CD8-positive, alpha-beta T cell (primary cell): ENCODE measurements at regions of chr19 and their contacts with region 1.

Region 1: GRCh38 chr19:41641879-41642485 is 15.1 kb upstream of the CEACAM4 start:
- DNase-seq: peak; percentile 36 to 82 (median 71)
- ATAC-seq: peak; percentile 66
- H3K4me3 ChIP-seq: no peak overlapping the region
- H3K4me3 Mint-ChIP-seq: no peak overlapping the region
- H3K27ac ChIP-seq: no peak overlapping the region
- H3K27ac Mint-ChIP-seq: no peak overlapping the region
- H3K4me1 ChIP-seq: peaks cover 21% of the 10 kb centered on the region
- H3K4me1 Mint-ChIP-seq: peaks cover 19% of the 10 kb centered on the region
- H3K27me3 ChIP-seq: no peaks in the 10 kb centered on the region
- H3K27me3 Mint-ChIP-seq: peaks cover 20% of the 10 kb centered on the region
- CTCF ChIP-seq: peak; percentile 95

Region 2: GRCh38 chr19:40777937-40778705 is 863.9 kb before region 1 on chr19 and contains the start of gene RAB4B:
- CTCF ChIA-PET with region 1: no interaction called
- POLR2A ChIA-PET with region 1: no interaction called
- intact Hi-C with region 1: no loop called
- DNase-seq: peak; percentile 100
- ATAC-seq: peak; percentile 83
- H3K4me3 ChIP-seq: peak within 1 kb of the TSS; percentile 87 to 89
- H3K4me3 Mint-ChIP-seq: peak within 1 kb of the TSS; percentile 92
- H3K27ac ChIP-seq: peak within 1 kb of the TSS; percentile 93 to 98
- H3K27ac Mint-ChIP-seq: peak within 1 kb of the TSS; percentile 95
- H3K4me1 ChIP-seq: peaks cover 26% of the 10 kb centered on the region
- H3K4me1 Mint-ChIP-seq: peaks cover 37% of the 10 kb centered on the region
- H3K27me3 ChIP-seq: no peaks in the 10 kb centered on the region
- H3K27me3 Mint-ChIP-seq: no peaks in the 10 kb centered on the region
- CTCF ChIP-seq: no peak
- total RNA-seq, gene RAB4B: 19.9 to 21.3 TPM

Region 3: DNA sequence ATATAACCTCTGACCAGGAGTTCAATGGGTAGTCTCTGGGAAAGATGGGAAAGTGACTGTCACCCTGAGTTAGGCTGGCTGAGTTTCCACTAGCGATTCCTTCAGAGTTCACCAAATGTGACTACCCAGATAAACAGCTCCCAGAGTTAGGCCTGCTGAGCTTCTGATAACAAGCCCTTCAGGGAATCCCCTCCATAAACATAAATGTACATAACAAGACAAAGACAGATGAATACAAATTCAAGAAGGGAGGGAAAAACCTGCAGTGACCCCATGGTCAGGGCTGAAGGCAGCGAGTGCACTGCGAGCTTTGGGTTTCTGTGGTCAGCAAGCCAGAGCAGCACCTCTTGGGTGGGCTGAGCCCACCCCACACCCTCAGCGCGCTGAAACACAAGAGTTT is 10.3 kb after region 1 on chr19:
- CTCF ChIA-PET with region 1: interaction called, 30 read pairs
- POLR2A ChIA-PET with region 1: interaction called, 4 read pairs
- intact Hi-C with region 1: no loop called
- DNase-seq: no peak
- ATAC-seq: no peak
- H3K4me3 ChIP-seq: no peak overlapping the region
- H3K4me3 Mint-ChIP-seq: no peak overlapping the region
- H3K27ac ChIP-seq: no peak overlapping the region
- H3K27ac Mint-ChIP-seq: no peak overlapping the region
- H3K4me1 ChIP-seq: peaks cover 9% of the 10 kb centered on the region
- H3K4me1 Mint-ChIP-seq: peaks cover 6% of the 10 kb centered on the region
- H3K27me3 ChIP-seq: peaks cover 0 to 3% of the 10 kb centered on the region in 2 experiments
- H3K27me3 Mint-ChIP-seq: peaks cover 40% of the 10 kb centered on the region
- CTCF ChIP-seq: no peak

Region 4: GRCh38 chr19:41701401-41702075 is 59.6 kb after region 1 on chr19:
- CTCF ChIA-PET with region 1: interaction called, 10 read pairs
- POLR2A ChIA-PET with region 1: no interaction called
- intact Hi-C with region 1: loop called in 1 of 2 experiments (anchors 10 kb)
- DNase-seq: peak in 1 of 9 experiments; percentile 37
- ATAC-seq: no peak
- H3K4me3 ChIP-seq: no peak overlapping the region
- H3K4me3 Mint-ChIP-seq: no peak overlapping the region
- H3K27ac ChIP-seq: no peak overlapping the region
- H3K27ac Mint-ChIP-seq: no peak overlapping the region
- H3K4me1 ChIP-seq: no peaks in the 10 kb centered on the region
- H3K4me1 Mint-ChIP-seq: no peaks in the 10 kb centered on the region
- H3K27me3 ChIP-seq: peaks cover 0 to 6% of the 10 kb centered on the region in 2 experiments
- H3K27me3 Mint-ChIP-seq: peaks cover 40% of the 10 kb centered on the region
- CTCF ChIP-seq: no peak

Region 5: GRCh38 chr19:41746593-41747227 is 104.7 kb after region 1 on chr19:
- CTCF ChIA-PET with region 1: interaction called, 6 read pairs
- POLR2A ChIA-PET with region 1: no interaction called
- intact Hi-C with region 1: loop called (anchors 1 to 5 kb)
- DNase-seq: peak in 7 of 9 experiments; percentile 8 to 65 (median 39)
- ATAC-seq: peak; percentile 66
- H3K4me3 ChIP-seq: no peak overlapping the region
- H3K4me3 Mint-ChIP-seq: no peak overlapping the region
- H3K27ac ChIP-seq: no peak overlapping the region
- H3K27ac Mint-ChIP-seq: no peak overlapping the region
- H3K4me1 ChIP-seq: no peaks in the 10 kb centered on the region
- H3K4me1 Mint-ChIP-seq: peaks cover 9% of the 10 kb centered on the region
- H3K27me3 ChIP-seq: no peaks in the 10 kb centered on the region
- H3K27me3 Mint-ChIP-seq: peaks cover 54% of the 10 kb centered on the region
- CTCF ChIP-seq: peak; percentile 45

Region 6: DNA sequence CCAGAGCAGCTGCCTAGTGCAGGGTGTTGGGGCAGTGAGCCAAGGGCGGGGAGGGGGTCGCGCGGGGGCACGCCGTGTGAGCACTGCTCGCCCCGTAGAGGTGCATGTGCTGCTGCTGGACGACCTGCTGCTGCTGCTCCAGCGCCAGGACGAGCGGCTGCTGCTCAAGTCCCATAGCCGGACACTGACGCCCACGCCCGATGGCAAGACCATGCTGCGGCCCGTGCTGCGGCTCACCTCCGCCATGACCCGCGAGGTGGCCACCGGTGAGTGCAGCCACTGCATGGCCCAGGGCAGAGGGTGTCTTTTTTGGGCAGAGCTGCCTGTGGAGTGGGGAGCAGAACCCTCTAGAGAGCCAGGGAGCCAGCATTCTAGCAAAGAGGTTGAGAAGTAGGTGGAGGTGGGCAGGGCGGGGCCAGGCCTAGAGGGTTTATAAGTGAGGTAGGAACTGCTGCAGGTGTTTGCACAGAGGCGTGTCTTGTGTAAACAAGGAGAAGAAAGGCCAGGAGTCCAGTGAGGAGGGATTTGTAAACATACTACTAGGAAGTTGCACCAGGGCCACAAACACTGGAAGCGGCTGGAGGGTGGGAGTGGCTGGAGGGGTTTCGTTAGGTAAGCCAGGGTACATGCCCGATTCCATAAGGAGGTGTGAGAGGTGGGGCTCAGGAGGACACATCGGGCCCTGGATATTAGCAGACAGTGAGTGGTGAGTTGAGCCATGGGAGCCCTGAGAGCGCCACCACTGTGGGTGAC is 262.3 kb after region 1 on chr19:
- CTCF ChIA-PET with region 1: no interaction called
- POLR2A ChIA-PET with region 1: no interaction called
- intact Hi-C with region 1: no loop called
- DNase-seq: no peak
- ATAC-seq: no peak
- H3K4me3 ChIP-seq: no peak overlapping the region
- H3K4me3 Mint-ChIP-seq: no peak overlapping the region
- H3K27ac ChIP-seq: no peak overlapping the region
- H3K27ac Mint-ChIP-seq: peak overlapping the region; percentile 29
- H3K4me1 ChIP-seq: peaks cover 61% of the 10 kb centered on the region
- H3K4me1 Mint-ChIP-seq: peaks cover 44% of the 10 kb centered on the region
- H3K27me3 ChIP-seq: no peaks in the 10 kb centered on the region
- H3K27me3 Mint-ChIP-seq: no peaks in the 10 kb centered on the region
- CTCF ChIP-seq: no peak